HAP-1 (cell line): ENCODE measurements at regions of chr2 and their contacts with region 1.

Region 1: DNA sequence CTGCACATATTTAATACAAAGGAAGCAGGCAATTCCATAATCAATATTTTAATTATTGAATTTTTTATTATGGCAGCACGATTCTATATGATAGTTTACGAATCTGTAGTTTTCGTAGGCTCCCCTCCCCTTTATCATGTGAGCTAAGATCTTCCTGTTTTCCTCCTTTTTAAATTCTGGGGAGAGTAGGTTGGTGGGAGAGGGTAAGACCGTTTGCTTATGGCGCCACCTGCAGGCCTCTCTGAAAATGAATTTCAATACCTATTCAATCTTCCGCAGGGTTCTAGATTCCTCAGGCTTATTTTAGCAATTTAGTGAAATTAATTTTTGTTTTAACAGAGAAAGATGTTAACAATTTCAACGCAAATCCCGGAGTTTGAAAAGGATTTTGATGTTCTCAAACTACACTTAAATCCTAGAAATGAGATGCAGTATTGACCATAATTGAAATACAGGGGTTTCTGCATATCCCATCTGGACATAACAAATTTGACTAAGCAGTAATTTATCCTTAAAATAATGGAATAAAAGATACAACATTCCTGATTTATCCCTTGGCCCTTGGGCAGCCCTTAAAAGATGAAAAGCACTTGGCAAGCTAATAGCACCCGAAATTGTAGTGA is 12.8 kb upstream of the GBX2 start:
- DNase-seq: peak; percentile 83 to 84
- H3K4me3 ChIP-seq: no peak overlapping the region
- H3K4me1 ChIP-seq: peaks cover 11% of the 10 kb centered on the region
- H3K27me3 ChIP-seq: peaks cover 8% of the 10 kb centered on the region

Region 2: DNA sequence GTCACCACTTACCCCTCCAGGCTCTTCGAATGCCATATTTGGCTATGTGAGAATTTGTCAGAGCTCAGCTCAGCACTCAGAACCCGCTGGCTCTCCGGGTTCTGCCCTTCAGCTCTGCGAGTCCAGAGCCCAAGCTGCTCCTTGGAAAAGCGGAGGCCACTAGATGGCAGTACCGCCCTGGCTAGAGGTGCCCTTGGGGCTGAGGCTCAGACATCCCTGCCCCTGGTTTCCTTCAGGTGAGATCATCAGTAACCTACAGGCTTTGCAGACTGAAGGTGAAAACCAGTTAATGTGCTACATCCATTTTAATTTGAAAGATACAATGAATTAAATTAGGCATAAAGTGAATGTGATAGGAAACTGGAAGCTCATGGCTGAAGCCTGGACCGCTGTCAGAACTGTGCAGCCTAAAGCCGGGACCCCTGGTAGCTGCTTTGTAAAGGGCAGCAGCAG is 401.5 kb before region 1 on chr2:
- in situ Hi-C with region 1: loop called (anchors 5 kb)
- DNase-seq: peak; percentile 43 to 84
- H3K4me3 ChIP-seq: no peak overlapping the region
- H3K4me1 ChIP-seq: no peaks in the 10 kb centered on the region
- H3K27me3 ChIP-seq: no peaks in the 10 kb centered on the region

Region 3: DNA sequence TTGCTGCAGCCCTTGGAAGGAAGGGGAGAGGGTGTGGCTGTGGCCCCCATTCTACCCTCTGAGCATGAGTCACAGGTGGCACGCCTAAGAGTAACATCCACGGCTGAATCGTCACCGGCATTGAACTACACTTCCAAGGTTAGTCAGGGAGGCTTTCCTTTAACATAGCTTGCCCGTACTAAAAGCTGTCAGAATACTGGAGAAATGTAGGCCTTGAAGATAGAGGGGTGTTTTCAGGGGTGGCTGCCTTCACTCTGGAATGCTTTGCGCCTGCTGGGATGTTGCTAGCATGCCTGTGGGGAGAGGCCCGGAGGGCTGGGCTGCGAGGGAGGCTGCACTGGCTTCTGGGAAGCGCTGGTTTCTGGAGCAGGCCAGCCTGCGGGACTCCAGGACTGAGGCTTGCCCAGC is 353.4 kb before region 1 on chr2:
- in situ Hi-C with region 1: no loop called
- DNase-seq: no peak
- H3K4me3 ChIP-seq: no peak overlapping the region
- H3K4me1 ChIP-seq: no peaks in the 10 kb centered on the region
- H3K27me3 ChIP-seq: no peaks in the 10 kb centered on the region

Region 4: DNA sequence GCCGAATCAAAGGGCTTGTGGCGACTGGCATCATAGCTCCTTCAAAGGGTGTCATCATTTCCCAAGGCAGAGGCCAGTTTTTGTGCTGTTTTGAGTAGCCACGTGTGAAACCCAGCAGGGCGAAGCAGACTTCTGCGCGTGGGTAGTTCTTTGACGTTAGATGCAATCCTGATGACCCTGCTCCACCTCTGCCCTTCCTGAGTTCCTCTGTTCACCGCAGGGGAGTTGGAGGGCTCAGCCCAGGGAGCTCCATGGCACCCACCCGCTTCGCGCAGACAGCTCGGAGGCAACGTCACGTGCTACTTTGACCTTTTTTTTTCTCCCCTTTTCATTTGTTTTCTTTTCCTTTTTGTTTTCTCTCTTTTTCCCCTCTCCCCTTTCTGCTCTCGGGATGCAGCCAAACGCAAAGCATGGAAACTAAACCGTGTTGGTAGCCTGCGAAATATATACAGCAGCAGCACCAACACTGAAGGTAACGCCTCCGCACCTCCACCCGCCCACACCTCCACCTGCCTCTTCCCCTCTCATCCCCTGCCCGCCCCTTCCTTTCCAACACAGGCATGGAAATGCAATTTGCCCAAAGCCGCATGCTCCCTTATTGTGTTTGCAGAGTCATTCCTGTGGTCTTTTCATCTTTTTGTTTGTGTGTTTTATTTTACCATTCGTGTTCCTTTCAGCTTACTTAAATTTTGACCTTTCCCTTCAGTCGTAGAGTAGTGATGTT is 166.4 kb before region 1 on chr2:
- in situ Hi-C with region 1: no loop called
- DNase-seq: peak in 1 of 2 experiments; percentile 35
- H3K4me3 ChIP-seq: no peak overlapping the region
- H3K4me1 ChIP-seq: peaks cover 17% of the 10 kb centered on the region
- H3K27me3 ChIP-seq: no peaks in the 10 kb centered on the region

Region 5: DNA sequence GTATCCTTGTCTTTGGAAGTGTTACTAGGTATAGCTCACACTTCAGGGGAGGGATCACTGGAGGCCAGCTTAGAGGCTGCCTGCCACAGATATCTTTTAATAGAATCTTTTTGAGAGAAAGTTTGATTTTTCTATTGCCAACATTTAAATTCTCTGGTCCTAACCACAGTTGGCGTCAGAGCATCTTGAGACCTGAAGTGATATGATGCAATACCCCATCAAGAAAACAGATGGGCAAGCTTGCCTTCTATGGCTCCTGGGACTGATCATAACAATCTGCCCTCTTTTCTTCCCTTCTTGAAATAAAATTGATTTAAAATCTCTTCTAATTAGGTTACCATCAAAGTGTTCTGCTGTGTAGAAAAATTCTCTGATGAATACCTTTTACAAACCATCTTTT is 283.2 kb after region 1 on chr2:
- in situ Hi-C with region 1: no loop called
- DNase-seq: no peak
- H3K4me3 ChIP-seq: no peak overlapping the region
- H3K4me1 ChIP-seq: no peaks in the 10 kb centered on the region
- H3K27me3 ChIP-seq: no peaks in the 10 kb centered on the region

Region 6: DNA sequence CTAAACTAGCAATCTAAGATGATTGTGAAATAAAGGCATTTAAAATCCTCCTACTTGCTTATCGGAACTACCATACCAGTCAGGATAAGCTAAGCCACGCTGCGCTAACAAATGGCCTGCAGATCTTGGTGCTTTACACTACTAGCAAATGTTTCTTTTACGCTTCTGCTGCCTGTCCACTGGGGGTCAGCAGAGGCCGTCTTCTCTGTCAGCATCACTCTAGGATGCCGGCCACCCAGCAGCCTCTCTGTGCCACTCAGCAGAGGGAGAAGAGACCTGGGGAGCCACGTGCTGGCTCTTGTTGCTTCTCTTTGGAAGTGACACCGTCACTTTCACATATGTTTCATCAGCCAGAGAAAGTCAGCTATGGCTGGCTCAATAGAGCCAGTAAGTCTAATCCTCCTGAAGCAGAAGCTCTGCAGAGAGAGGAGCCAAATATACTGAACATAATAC is 941.3 kb after region 1 on chr2:
- in situ Hi-C with region 1: no loop called
- DNase-seq: peak; percentile 20 to 67
- H3K4me3 ChIP-seq: no peak overlapping the region
- H3K4me1 ChIP-seq: no peaks in the 10 kb centered on the region
- H3K27me3 ChIP-seq: no peaks in the 10 kb centered on the region